Left lung (tissue), 14 donors: ENCODE measurements at regions of chr12 and their contacts with region 1.

Region 1: DNA sequence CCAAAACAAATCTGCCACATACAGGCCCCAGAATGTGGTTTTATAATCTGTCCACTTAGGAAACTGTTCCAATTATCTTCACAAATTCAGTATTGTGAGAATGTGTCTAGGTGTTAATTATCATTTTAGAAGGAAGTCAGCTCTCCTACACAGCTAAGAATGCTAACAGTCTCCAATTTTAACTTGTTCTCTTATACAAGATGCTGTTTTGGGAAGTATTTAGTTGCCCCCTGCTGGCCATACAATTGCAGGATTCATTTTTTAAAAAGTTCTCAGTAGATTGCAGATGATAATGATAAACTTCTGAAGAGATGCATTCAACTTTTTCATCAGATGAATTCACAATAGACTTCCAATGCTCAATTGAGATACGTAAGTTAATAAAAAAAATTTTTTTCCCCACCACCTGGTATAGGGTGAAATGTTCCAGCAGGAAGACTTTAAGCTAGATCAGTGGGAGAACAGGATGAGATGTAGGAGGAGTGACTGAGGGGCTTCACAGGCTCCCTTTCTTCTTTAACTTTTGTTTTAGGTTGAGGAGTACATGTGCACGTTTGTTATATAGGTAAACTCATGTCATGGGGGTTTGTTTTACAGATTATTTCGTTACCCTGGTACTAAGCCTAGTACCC is 27.3 kb upstream of the OSBPL8 start:
- DNase-seq: peak in 2 of 4 donors; percentile 20 to 39
- ATAC-seq: peak; percentile 64
- H3K4me3 ChIP-seq: no peak overlapping the region
- H3K27ac ChIP-seq: no peak overlapping the region
- H3K4me1 ChIP-seq: peaks cover 0 to 34% of the 10 kb centered on the region in 2 donors
- H3K27me3 ChIP-seq: no peaks in the 10 kb centered on the region
- CTCF ChIP-seq: peak; percentile 48 to 69

Region 2: DNA sequence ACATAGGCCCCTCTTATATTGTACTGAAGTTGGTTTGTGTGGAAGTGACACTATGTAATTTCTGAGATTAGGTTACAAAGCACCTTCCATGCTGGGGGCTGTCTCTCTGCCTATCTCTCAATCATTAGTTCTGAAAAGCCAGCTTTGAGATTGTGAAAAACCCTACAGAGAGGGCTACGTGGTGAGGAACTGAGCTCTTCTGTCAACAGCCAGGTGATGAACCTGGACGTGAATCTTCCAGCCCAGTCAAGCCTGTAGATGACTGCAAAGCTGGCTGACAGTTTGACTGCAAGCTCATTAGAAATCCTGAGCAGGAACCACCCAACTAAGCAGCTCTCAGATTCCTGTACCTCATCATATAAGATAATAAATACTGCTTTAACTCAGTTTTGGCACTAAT is 202.3 kb before region 1 on chr12:
- intact Hi-C with region 1: loop called in 1 of 2 experiments (anchors 10 kb)
- DNase-seq: no peak
- ATAC-seq: no peak
- H3K4me3 ChIP-seq: no peak overlapping the region
- H3K27ac ChIP-seq: no peak overlapping the region
- H3K4me1 ChIP-seq: no peaks in the 10 kb centered on the region
- H3K27me3 ChIP-seq: no peaks in the 10 kb centered on the region
- CTCF ChIP-seq: no peak

Region 3: GRCh38 chr12:76519538-76519937 is 67.3 kb before region 1 on chr12:
- intact Hi-C with region 1: no loop called
- DNase-seq: no peak
- ATAC-seq: no peak
- H3K4me3 ChIP-seq: no peak overlapping the region
- H3K27ac ChIP-seq: peak overlapping the region in 1 of 2 donors; percentile 72
- H3K4me1 ChIP-seq: peaks cover 0 to 10% of the 10 kb centered on the region in 2 donors
- H3K27me3 ChIP-seq: no peaks in the 10 kb centered on the region
- CTCF ChIP-seq: no peak